ENCODE measurements at regions of chr4 and their contacts with region 1.

Region 1: DNA sequence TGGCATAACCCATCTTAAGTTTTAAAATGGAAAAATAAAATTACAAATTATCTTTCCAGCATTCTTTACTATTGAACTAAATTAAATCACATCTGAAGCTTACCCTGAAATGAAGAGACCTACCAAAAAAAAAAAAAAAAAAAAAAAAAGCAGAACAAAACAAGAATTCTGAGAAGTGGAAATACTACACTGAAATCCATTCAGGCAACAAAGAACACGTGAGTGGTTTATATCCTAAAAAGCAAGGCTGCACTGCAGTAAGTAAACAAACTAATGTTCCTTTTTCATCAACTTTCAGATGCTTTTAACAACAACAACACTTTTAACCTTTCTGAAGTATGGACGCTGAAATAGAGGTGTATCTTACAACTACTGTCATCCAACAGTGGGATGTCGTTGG is 7.5 kb downstream of the FRYL start:
- DNase-seq: no peak
- H3K27ac ChIP-seq: no peak overlapping the region
- CTCF ChIP-seq: no peak

Region 2: GRCh38 chr4:48708444-48709009 is 64.0 kb before region 1 on chr4:
- CTCF ChIA-PET with region 1: no interaction called
- POLR2A ChIA-PET with region 1: interaction called, 10 read pairs
- DNase-seq: no peak
- H3K27ac ChIP-seq: no peak overlapping the region
- CTCF ChIP-seq: no peak

Region 3: DNA sequence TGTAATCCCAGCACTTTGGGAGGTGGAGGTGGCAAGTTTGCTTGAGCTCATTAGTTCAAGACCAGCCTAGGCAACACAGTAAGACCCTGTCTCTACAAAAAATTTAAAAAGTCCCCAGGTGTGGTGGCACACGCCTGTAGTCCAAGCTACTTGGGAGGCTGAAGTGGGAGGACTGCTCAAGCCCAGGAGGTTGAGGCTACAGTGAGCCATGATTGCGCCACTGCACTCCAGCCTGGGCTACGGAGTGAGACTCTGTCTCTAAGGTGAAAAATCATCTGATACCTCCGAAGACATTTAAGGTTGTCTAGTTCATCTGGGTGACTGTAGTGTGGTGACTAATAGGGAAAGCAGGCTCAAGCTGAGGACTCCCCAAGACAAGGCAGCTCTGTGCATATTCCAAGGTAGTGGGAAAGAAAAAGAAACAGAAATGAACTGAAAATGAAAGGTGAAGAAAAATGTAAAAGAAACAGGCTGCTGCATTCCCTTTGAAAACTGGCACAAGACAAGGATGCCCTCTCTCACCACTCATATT is 15.8 kb before region 1 on chr4:
- CTCF ChIA-PET with region 1: no interaction called
- POLR2A ChIA-PET with region 1: no interaction called
- DNase-seq: peak; percentile 52
- H3K27ac ChIP-seq: peak overlapping the region; percentile 57
- CTCF ChIP-seq: no peak